ENCODE measurements at regions of chr15 and their contacts with region 1.

Region 1: DNA sequence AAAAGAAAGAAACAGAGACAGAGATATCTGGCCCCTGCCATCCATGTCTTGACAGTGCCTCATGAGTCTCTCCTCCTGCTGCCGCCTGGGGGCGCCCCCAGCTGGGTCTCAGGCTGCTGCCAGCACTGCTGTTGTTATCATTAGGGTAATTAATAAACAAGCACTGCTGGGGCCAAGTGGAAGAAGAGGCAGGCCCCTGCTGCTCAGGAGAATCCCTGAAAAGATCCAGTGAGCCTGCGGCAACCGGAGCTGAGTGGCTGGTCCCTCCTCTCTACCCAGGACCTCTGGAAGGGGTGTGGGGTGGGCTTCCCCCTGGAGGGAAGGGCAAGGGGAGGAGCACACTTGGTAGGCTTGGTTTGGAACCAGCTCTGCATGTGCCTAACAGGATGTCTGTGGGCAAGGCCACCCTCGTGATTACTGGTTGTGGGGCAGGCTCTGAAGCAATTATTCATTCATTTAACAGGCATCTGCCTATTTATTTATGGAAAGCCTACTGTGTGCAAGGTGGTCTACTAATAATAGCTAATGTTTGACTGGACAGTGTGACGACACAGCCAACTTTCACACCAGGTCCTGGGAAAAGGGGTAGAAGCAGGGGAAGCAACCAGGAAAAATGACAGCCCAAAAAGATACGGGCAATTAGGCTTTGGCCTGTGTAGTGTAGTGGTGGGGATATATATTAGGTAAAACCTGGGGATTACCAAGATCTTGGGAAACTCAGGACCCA is 1.2 kb upstream of the TYRO3 start:
- DNase-seq: peak; percentile 77 to 89 (median 86)
- H3K4me3 ChIP-seq: peak overlapping the region in 57 of 59 donors; percentile 4 to 89 (median 78)
- H3K27ac ChIP-seq: peak overlapping the region; percentile 76 to 99 (median 95)
- H3K27me3 ChIP-seq: no peaks in the 10 kb centered on the region
- CTCF ChIP-seq: peak; percentile 68 to 96 (median 89)

Region 2: DNA sequence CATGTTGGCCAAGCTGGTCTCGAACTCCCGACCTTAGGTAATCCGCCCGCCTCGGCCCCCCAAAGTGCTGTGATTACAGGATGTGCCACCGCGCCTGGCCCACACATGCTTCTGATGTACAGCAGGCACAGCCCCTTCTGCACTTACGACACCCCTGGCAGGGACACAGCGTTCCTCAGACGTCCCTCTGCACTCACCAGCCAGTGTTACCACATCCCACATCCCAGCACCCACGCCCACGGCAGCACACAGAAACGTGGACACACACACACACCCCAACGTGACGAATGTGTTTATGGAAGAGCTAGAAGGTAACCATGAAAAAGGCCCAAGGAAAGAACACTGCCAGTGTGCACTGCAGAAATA is 13.2 kb before region 1 on chr15:
- intact Hi-C with region 1: loop called in 1 of 2 experiments (anchors 2 kb)
- DNase-seq: peak in 8 of 10 donors; percentile 43 to 84 (median 72)
- H3K4me3 ChIP-seq: peak overlapping the region; percentile 64 to 99 (median 87)
- H3K27ac ChIP-seq: peak overlapping the region in 58 of 59 donors; percentile 21 to 95 (median 83)
- H3K27me3 ChIP-seq: no peaks in the 10 kb centered on the region
- CTCF ChIP-seq: no peak

Region 3: DNA sequence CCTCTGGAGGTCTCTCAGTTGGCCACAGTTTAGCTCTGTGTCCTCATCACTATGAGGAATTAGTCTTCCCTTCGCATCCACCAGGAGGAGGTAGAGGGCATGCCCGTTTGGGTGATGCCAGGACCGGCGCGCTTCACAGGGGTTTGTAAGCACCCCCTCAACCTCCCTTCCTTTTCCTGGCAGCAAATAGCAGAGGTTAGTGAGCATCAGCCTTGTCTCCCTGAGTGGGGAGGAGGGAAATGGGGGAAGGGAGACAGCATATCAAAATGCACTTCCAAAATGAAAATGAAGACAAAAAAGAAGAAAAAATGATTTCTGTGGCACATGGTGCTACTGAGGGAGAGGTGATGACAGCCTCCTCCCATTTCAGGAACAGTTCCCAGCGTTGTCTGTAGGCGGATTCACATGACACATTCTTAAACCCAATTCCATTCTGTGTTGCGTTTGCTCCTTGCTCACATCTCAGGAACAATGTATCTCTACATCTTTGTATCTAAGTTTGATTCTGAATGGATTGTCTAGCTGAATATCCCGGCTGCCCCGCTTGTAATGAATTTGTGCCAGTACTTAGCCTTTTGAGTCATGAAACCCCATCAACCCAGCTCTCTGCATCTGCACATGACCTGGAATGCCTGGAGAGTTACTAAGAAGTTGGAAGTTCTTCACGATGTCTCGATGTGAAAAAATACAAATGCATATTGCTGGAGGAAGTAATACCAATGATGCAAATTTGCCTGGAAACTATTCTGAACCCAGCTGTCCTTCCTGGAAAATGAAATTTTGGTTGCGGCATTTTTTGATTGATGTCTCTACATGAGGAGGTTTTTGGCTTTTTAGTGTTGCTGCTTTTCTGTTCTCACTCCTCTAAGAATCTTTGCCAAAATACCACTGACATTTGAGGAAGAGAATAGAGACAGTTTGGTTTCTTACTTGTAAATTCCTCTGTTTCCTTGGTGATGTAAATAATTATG is 46.4 kb after region 1 on chr15:
- intact Hi-C with region 1: loop called (anchors 5 kb)
- DNase-seq: peak; percentile 39 to 80 (median 61)
- H3K4me3 ChIP-seq: peak overlapping the region in 55 of 59 donors; percentile 2 to 62 (median 40)
- H3K27ac ChIP-seq: peak overlapping the region in 52 of 59 donors; percentile 3 to 83 (median 54)
- H3K27me3 ChIP-seq: no peaks in the 10 kb centered on the region
- CTCF ChIP-seq: peak; percentile 46 to 86 (median 74)

Region 4: GRCh38 chr15:41634072-41634626 is 76.3 kb after region 1 on chr15:
- intact Hi-C with region 1: no loop called
- DNase-seq: no peak
- H3K4me3 ChIP-seq: no peak overlapping the region
- H3K27ac ChIP-seq: peak overlapping the region in 8 of 59 donors; percentile 0 to 67 (median 27)
- H3K27me3 ChIP-seq: no peaks in the 10 kb centered on the region
- CTCF ChIP-seq: no peak

Region 5: GRCh38 chr15:41660235-41661077 is 102.6 kb after region 1 on chr15 and contains the start of gene MGA:
- intact Hi-C with region 1: loop called (anchors 2 to 5 kb)
- DNase-seq: peak; percentile 70 to 89 (median 78)
- H3K4me3 ChIP-seq: peak within 1 kb of the TSS; percentile 43 to 83 (median 69)
- H3K27ac ChIP-seq: peak within 1 kb of the TSS; percentile 29 to 93 (median 83)
- H3K27me3 ChIP-seq: no peaks in the 10 kb centered on the region
- CTCF ChIP-seq: peak in 46 of 56 donors; percentile 11 to 64 (median 42)
- total RNA-seq, gene MGA: 63.5 to 108 (median 82.2) TPM

Region 6: GRCh38 chr15:41811432-41812195 is 253.8 kb after region 1 on chr15:
- intact Hi-C with region 1: loop called (anchors 1 to 5 kb)
- DNase-seq: peak; percentile 78 to 93 (median 88)
- H3K4me3 ChIP-seq: no peak overlapping the region
- H3K27ac ChIP-seq: peak overlapping the region in 22 of 59 donors; percentile 1 to 83 (median 40)
- H3K27me3 ChIP-seq: no peaks in the 10 kb centered on the region
- CTCF ChIP-seq: peak; percentile 60 to 97 (median 90)

Measured in dorsolateral prefrontal cortex (tissue), 120 donors.